IMR-90 (cell line): ENCODE measurements at regions of chr6 and their contacts with region 1.

Region 1: GRCh38 chr6:55694148-55694547 is 115.2 kb upstream of the HMGCLL1 start:
- DNase-seq: peak; percentile 78
- ATAC-seq: peak; percentile 96
- H3K4me3 ChIP-seq: no peak overlapping the region
- H3K27ac ChIP-seq: no peak overlapping the region
- H3K4me1 ChIP-seq: peaks cover 2% of the 10 kb centered on the region; the same call in 1 of the 2 replicates
- H3K27me3 ChIP-seq: no peaks in the 10 kb centered on the region
- CTCF ChIP-seq: no peak
- POLR2A ChIP-seq: no peak
- RAD21 ChIP-seq: no peak

Region 2: DNA sequence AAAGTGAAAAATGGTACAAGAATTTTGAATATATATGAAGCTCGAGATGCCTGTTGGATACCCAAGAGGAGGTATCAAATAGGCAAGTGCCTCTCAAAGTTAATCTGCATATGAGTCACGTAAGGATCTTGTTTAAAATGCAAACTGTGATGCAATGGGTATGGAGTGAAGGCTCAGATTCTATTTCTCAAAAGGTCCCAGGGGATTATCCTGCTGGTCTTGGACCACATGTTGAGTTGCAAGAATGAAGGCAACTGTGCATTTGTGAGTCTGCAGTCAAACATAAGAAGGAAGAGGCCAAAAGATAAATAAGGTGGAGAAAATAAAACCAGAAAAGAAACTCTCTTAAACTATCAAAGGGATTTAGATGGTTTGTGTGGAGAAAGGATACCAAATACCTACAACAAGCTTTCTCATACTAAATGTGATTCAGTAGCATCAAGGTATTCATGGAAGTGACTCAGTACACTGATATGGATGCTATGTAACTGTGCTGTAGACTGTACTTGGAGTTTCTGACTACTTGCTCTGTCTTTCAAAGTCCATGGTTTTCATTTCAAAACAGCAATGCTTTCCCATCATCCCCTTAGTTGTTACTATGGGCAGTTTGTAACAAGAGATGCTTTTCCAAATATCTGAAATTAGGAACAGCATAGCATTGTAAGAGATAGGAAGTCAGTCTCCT is 260.6 kb before region 1 on chr6:
- CTCF ChIA-PET with region 1: no interaction called
- POLR2A ChIA-PET with region 1: no interaction called
- dilution Hi-C with region 1: no loop called
- in situ Hi-C with region 1: no loop called
- intact Hi-C with region 1: no loop called
- DNase-seq: peak; percentile 63
- ATAC-seq: peak; percentile 89
- H3K4me3 ChIP-seq: no peak overlapping the region
- H3K27ac ChIP-seq: no peak overlapping the region
- H3K4me1 ChIP-seq: peaks cover 2% of the 10 kb centered on the region; the same call in 1 of the 2 replicates
- H3K27me3 ChIP-seq: no peaks in the 10 kb centered on the region
- CTCF ChIP-seq: no peak
- POLR2A ChIP-seq: no peak
- RAD21 ChIP-seq: no peak

Region 3: DNA sequence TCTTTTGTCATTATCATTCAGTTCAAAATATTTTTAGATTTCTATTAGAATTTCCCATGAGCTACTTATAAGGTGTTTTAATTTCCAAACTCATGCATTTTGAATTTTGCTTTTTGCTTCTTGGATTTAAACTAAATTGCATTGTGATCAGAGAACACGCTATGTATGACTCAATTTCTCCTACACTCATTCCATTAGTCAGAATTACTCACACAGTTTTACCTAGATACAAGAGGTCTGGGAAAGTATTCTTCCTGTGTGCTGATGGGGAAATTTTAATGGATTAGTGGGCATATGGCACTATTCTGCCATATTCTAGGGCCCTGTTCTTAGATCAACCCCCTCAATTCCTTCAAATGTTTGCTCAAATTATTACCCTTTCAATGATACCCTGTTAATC is 231.1 kb after region 1 on chr6:
- CTCF ChIA-PET with region 1: no interaction called
- POLR2A ChIA-PET with region 1: interaction called, 11 read pairs
- dilution Hi-C with region 1: no loop called
- in situ Hi-C with region 1: no loop called
- intact Hi-C with region 1: no loop called
- DNase-seq: peak; percentile 94
- ATAC-seq: peak; percentile 37; the same call in 1 of the 2 replicates
- H3K4me3 ChIP-seq: no peak overlapping the region
- H3K27ac ChIP-seq: no peak overlapping the region
- H3K4me1 ChIP-seq: no peaks in the 10 kb centered on the region
- H3K27me3 ChIP-seq: no peaks in the 10 kb centered on the region
- CTCF ChIP-seq: no peak
- POLR2A ChIP-seq: no peak
- RAD21 ChIP-seq: no peak